ENCODE measurements at regions of chr4 and their contacts with region 1.

Region 1: GRCh38 chr4:112031712-112032328 is 113.4 kb upstream of the FAM241A start:
- DNase-seq: peak; percentile 31
- H3K4me3 ChIP-seq: no peak overlapping the region
- H3K27ac ChIP-seq: no peak overlapping the region
- H3K4me1 ChIP-seq: peaks cover 2% of the 10 kb centered on the region
- H3K27me3 ChIP-seq: peaks cover 8% of the 10 kb centered on the region
- CTCF ChIP-seq: peak; percentile 61 to 75

Region 2: GRCh38 chr4:111136438-111136837 is 895.4 kb before region 1 on chr4:
- CTCF ChIA-PET with region 1: no interaction called
- dilution Hi-C with region 1: no loop called
- in situ Hi-C with region 1: loop called in 1 of 2 experiments (anchors 25 kb)
- intact Hi-C with region 1: no loop called
- DNase-seq: no peak
- H3K4me3 ChIP-seq: no peak overlapping the region
- H3K27ac ChIP-seq: no peak overlapping the region
- H3K4me1 ChIP-seq: no peaks in the 10 kb centered on the region
- H3K27me3 ChIP-seq: no peaks in the 10 kb centered on the region
- CTCF ChIP-seq: peak in 1 of 2 donors; percentile 38

Region 3: DNA sequence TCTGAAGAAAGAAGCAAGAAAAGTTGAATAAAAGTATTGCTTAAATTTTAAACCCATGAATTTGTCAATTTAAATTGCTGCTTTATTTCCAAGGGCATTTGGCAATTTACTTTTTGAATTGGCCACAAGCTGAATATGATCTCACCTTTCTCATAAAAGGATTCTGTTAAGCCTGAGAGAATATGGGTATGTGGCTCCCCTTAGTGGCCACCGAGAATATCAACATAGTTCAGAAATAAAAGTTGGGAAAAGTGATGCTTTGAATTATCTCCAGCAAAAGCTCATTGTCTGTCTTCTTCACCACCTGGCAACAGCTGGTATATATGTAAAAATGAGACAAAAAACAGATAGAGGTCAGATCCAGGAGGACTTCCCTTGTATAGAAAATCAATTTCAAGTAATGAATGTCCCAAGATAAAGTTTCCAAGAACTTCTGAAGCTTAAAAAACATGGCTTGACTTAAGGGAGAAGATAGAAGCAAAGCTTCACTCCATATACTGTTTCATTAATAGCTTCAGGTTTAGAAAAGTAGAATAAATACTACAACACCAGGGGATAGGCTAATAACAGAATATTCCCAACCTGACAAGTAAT is 177.2 kb before region 1 on chr4:
- CTCF ChIA-PET with region 1: interaction called, 8 read pairs
- dilution Hi-C with region 1: no loop called
- in situ Hi-C with region 1: no loop called
- intact Hi-C with region 1: loop called (anchors 2 kb)
- DNase-seq: peak; percentile 16
- H3K4me3 ChIP-seq: no peak overlapping the region
- H3K27ac ChIP-seq: no peak overlapping the region
- H3K4me1 ChIP-seq: no peaks in the 10 kb centered on the region
- H3K27me3 ChIP-seq: peaks cover 3% of the 10 kb centered on the region
- CTCF ChIP-seq: peak; percentile 66 to 68

Region 4: GRCh38 chr4:111943795-111944203 is 88.0 kb before region 1 on chr4:
- CTCF ChIA-PET with region 1: interaction called, 7 read pairs
- dilution Hi-C with region 1: no loop called
- in situ Hi-C with region 1: loop called (anchors 5 to 10 kb)
- intact Hi-C with region 1: loop called (anchors 1 kb)
- DNase-seq: peak; percentile 46
- H3K4me3 ChIP-seq: no peak overlapping the region
- H3K27ac ChIP-seq: no peak overlapping the region
- H3K4me1 ChIP-seq: no peaks in the 10 kb centered on the region
- H3K27me3 ChIP-seq: peaks cover 4% of the 10 kb centered on the region
- CTCF ChIP-seq: peak; percentile 62 to 81

Region 5: DNA sequence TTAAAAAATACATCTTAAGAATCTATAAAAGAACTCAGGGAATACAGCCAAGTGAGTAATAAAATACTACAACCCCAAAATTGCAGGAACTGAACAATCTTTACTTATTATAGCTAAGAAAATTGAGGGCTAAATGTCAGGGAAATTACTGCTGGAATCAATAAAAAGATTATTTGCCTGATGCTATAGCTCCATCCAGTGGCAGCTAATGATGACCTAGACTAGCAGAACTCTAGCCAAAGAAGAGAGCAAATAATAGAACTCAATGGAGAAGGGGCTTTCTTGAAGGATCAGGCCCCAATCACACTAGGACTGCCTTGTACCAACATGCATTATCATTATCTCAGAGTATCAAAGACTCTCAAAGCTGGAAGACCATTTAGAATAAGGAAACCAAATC is 28.4 kb after region 1 on chr4:
- CTCF ChIA-PET with region 1: interaction called, 5 read pairs
- dilution Hi-C with region 1: no loop called
- in situ Hi-C with region 1: no loop called
- intact Hi-C with region 1: loop called (anchors 1 kb)
- DNase-seq: no peak
- H3K4me3 ChIP-seq: no peak overlapping the region
- H3K27ac ChIP-seq: no peak overlapping the region
- H3K4me1 ChIP-seq: no peaks in the 10 kb centered on the region
- H3K27me3 ChIP-seq: no peaks in the 10 kb centered on the region
- CTCF ChIP-seq: peak; percentile 70

Region 6: DNA sequence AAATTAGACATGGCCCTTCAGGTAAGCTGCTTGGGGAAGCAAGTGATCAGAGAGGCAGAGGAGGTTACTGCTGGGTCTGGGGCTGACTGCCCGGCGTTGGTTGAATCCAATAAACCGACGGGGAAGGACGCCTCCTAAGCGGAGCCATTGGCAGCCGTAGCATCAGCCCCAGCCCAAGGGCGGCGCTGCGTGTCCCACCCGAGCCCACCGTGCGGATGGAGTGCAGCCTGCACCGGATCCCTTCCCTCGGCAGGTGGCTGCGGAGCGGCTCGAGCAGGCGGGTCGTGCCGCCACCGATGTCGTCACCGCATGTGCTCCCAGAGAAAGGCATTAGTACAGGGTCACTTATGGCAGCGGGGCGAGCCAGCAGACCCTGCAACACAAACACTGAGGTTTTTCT is 347.5 kb after region 1 on chr4:
- CTCF ChIA-PET with region 1: no interaction called
- dilution Hi-C with region 1: no loop called
- in situ Hi-C with region 1: no loop called
- intact Hi-C with region 1: no loop called
- DNase-seq: no peak
- H3K4me3 ChIP-seq: no peak overlapping the region
- H3K27ac ChIP-seq: no peak overlapping the region
- H3K4me1 ChIP-seq: no peaks in the 10 kb centered on the region
- H3K27me3 ChIP-seq: no peaks in the 10 kb centered on the region
- CTCF ChIP-seq: no peak

Measured in mammary epithelial cell (primary cell).